Activated CD4-positive, alpha-beta memory T cell treated with anti-CD3 and anti-CD28 coated beads for 36 hours (primary cell): ENCODE measurements at regions of chr4 and their contacts with region 1.

Region 1: GRCh38 chr4:26719954-26720552 is 136.2 kb downstream of the TBC1D19 start:
- DNase-seq: no peak
- H3K4me3 Mint-ChIP-seq: no peak overlapping the region
- H3K27ac Mint-ChIP-seq: no peak overlapping the region
- H3K4me1 Mint-ChIP-seq: no peaks in the 10 kb centered on the region
- H3K27me3 Mint-ChIP-seq: no peaks in the 10 kb centered on the region

Region 2: GRCh38 chr4:26028793-26029567 is 691.1 kb before region 1 on chr4:
- CTCF ChIA-PET with region 1: no interaction called
- POLR2A ChIA-PET with region 1: no interaction called
- intact Hi-C with region 1: loop called (anchors 10 kb)
- DNase-seq: peak; percentile 85
- H3K4me3 Mint-ChIP-seq: no peak overlapping the region
- H3K27ac Mint-ChIP-seq: no peak overlapping the region
- H3K4me1 Mint-ChIP-seq: peaks cover 16% of the 10 kb centered on the region
- H3K27me3 Mint-ChIP-seq: peaks cover 2% of the 10 kb centered on the region